Posterior cingulate gyrus (tissue), 11 donors: ENCODE measurements at regions of chr21 and their contacts with region 1.

Region 1: GRCh38 chr21:25607151-25608043 is at the start of gene MRPL39:
- DNase-seq: peak; percentile 83 to 98 (median 88)

Region 2: DNA sequence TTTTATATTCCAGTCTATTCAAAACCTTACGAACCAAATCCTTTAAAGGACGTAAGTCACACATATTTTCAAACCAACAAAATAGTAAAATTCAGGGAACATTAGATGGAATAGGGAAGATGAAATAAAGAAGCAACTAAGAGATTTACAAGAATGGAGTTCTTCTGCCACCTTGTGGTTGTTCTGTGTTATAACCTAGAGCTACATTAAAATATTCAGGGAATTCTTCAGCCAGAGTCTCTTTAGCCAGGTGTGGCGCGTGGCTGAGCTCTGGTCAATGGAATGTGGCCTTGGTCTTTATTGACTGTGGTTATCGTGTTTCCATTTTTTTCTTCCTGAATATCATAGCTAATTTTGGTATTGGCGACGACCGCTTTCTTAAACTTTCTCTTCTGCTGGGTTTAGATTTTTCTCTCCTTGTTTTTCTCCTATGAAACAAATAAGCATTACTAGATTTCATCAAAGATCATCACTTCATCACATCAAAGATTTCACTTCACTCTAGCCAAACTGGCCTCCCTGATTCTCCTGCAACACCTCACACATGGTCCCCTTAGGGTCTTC is 221.4 kb before region 1 on chr21:
- intact Hi-C with region 1: no loop called
- DNase-seq: peak in 1 of 10 donors; percentile 58

Region 3: GRCh38 chr21:25708467-25709065 is 101.2 kb after region 1 on chr21:
- intact Hi-C with region 1: loop called (anchors 1 kb)
- DNase-seq: peak in 5 of 10 donors; percentile 19 to 81 (median 27)

Region 4: GRCh38 chr21:25734904-25735645 is 127.7 kb after region 1 on chr21 and contains the starts of genes ATP5PF and GABPA:
- intact Hi-C with region 1: loop called (anchors 1 kb)
- DNase-seq: peak; percentile 94 to 99 (median 96)

Region 5: GRCh38 chr21:25801217-25802014 is 194.0 kb after region 1 on chr21:
- intact Hi-C with region 1: loop called (anchors 5 kb)
- DNase-seq: peak in 9 of 10 donors; percentile 61 to 95 (median 69)

Region 6: GRCh38 chr21:26715878-26716506 is 1108.6 kb after region 1 on chr21:
- intact Hi-C with region 1: loop called (anchors 10 kb)
- DNase-seq: peak in 7 of 10 donors; percentile 39 to 93 (median 60)